GM12878 (cell line): ENCODE measurements at regions of chr2 and their contacts with region 1.

Region 1: DNA sequence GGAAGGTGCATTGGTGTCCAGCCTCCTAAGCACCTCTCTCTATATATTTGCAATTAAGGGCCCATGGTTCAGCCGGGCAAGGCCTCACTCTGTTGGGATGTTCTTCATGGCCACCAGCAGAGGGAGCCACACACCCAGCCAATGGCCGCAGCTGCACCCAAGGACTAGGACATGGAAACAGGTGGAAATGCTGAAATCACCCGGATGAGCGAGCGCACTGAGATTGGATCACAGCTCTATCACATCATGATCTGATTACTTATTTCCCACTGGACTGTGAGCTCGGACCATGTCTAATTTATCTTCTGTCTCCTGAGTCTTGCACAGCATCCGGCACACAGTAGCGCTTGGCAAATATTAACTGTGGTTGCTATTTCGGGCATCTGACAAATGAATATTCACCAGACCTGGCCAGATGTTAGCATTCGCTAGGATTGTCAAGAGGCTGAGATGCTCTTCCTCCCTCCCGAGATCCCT is 31.2 kb downstream of the KIF3C start:
- DNase-seq: peak; percentile 24
- ATAC-seq: peak; percentile 99
- H3K4me3 ChIP-seq: no peak overlapping the region
- H3K27ac ChIP-seq: no peak overlapping the region
- H3K4me1 ChIP-seq: no peaks in the 10 kb centered on the region
- H3K27me3 ChIP-seq: no peaks in the 10 kb centered on the region
- CTCF ChIP-seq: peak; percentile 95 to 96 (median 95)
- EP300 ChIP-seq: no peak
- POLR2A ChIP-seq: no peak
- RAD21 ChIP-seq: peak; percentile 93

Region 2: GRCh38 chr2:25903216-25903776 is 47.8 kb before region 1 on chr2:
- CTCF ChIA-PET with region 1: no interaction called
- POLR2A ChIA-PET with region 1: no interaction called
- RAD21 ChIA-PET with region 1: no interaction called
- SMC1A ChIA-PET with region 1: no interaction called
- in situ Hi-C with region 1: loop called (anchors 5 kb)
- intact Hi-C with region 1: no loop called
- DNase-seq: no peak
- ATAC-seq: no peak
- H3K4me3 ChIP-seq: no peak overlapping the region
- H3K27ac ChIP-seq: no peak overlapping the region
- H3K4me1 ChIP-seq: no peaks in the 10 kb centered on the region
- H3K27me3 ChIP-seq: no peaks in the 10 kb centered on the region; a peak in 2 of 4 replicates
- CTCF ChIP-seq: no peak
- EP300 ChIP-seq: no peak
- POLR2A ChIP-seq: no peak
- RAD21 ChIP-seq: no peak

Region 3: GRCh38 chr2:25972049-25972823 is 21.1 kb after region 1 on chr2:
- CTCF ChIA-PET with region 1: interaction called, 13 read pairs
- POLR2A ChIA-PET with region 1: no interaction called
- RAD21 ChIA-PET with region 1: no interaction called
- SMC1A ChIA-PET with region 1: interaction called, 5 read pairs
- in situ Hi-C with region 1: no loop called
- intact Hi-C with region 1: no loop called
- DNase-seq: no peak
- ATAC-seq: no peak
- H3K4me3 ChIP-seq: no peak overlapping the region
- H3K27ac ChIP-seq: no peak overlapping the region
- H3K4me1 ChIP-seq: no peaks in the 10 kb centered on the region
- H3K27me3 ChIP-seq: no peaks in the 10 kb centered on the region
- CTCF ChIP-seq: no peak
- EP300 ChIP-seq: no peak
- POLR2A ChIP-seq: no peak
- RAD21 ChIP-seq: no peak

Region 4: DNA sequence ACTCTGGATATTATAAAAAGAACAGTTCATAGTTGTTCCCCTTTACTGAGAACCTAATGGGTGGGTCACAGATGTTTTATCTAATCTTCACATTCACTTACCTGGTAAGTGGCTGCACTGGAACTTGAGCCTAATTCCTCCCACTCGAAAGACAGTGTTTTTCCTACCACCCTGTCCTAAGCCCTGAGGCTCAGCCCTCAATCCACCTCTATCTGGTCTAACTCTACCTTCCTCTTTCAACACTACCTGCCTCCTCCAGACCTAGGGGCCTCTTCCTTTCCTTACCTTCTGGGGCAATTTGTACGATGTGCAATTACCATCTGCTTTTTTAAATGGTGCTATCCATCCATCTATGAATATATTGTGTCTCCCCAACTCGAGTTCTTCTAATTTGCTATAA is 40.9 kb after region 1 on chr2:
- CTCF ChIA-PET with region 1: interaction called, 7 read pairs
- POLR2A ChIA-PET with region 1: no interaction called
- RAD21 ChIA-PET with region 1: interaction called, 6 read pairs
- SMC1A ChIA-PET with region 1: interaction called, 10 read pairs
- in situ Hi-C with region 1: no loop called
- intact Hi-C with region 1: no loop called
- DNase-seq: no peak
- ATAC-seq: peak; percentile 50
- H3K4me3 ChIP-seq: no peak overlapping the region
- H3K27ac ChIP-seq: no peak overlapping the region
- H3K4me1 ChIP-seq: no peaks in the 10 kb centered on the region
- H3K27me3 ChIP-seq: no peaks in the 10 kb centered on the region
- CTCF ChIP-seq: no peak
- EP300 ChIP-seq: no peak
- POLR2A ChIP-seq: no peak
- RAD21 ChIP-seq: no peak

Region 5: GRCh38 chr2:26095758-26096157 is 144.6 kb after region 1 on chr2:
- CTCF ChIA-PET with region 1: no interaction called
- POLR2A ChIA-PET with region 1: no interaction called
- RAD21 ChIA-PET with region 1: no interaction called
- SMC1A ChIA-PET with region 1: no interaction called
- in situ Hi-C with region 1: no loop called
- intact Hi-C with region 1: no loop called
- DNase-seq: no peak
- ATAC-seq: no peak
- H3K4me3 ChIP-seq: no peak overlapping the region
- H3K27ac ChIP-seq: no peak overlapping the region
- H3K4me1 ChIP-seq: no peaks in the 10 kb centered on the region
- H3K27me3 ChIP-seq: no peaks in the 10 kb centered on the region
- CTCF ChIP-seq: no peak
- EP300 ChIP-seq: no peak
- POLR2A ChIP-seq: no peak
- RAD21 ChIP-seq: no peak

Region 6: DNA sequence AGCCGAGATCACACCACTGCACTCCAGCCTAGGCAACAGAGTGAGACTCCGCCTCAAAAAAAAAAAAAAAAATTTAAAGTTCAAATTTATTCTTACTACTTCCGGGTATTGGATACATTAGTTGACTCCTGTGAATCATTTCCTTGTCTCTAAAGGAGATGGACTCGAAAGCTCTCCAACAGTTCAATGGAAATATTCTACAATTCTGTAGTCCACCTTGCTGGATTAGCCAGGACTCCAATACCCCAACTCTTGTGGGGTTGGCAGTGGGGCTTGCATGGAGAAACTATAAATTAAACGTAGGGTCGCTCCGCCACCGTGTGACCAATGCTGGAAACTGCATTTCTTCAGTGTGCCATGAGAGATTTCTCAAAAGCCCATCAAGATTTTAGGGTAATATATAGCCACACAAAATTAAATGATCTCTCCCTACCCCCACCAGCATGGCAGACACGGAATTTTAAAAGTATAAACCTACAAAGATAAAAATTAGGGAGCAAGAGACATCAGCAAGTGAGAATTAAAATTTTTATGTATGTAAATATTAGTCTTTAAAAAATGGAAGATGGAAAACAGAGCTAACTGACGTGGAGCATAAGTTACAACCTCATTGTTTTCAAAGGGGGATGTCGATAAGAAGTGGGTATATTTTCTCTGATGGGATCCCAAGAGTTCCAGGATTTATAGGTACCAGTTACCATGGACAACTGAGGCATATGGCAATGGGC is 194.0 kb after region 1 on chr2:
- CTCF ChIA-PET with region 1: interaction called, 37 read pairs
- POLR2A ChIA-PET with region 1: no interaction called
- RAD21 ChIA-PET with region 1: interaction called, 8 read pairs
- SMC1A ChIA-PET with region 1: interaction called, 15 read pairs
- in situ Hi-C with region 1: loop called (anchors 5 kb)
- intact Hi-C with region 1: loop called (anchors 1 kb)
- DNase-seq: peak; percentile 23
- ATAC-seq: peak; percentile 87
- H3K4me3 ChIP-seq: no peak overlapping the region
- H3K27ac ChIP-seq: no peak overlapping the region
- H3K4me1 ChIP-seq: no peaks in the 10 kb centered on the region
- H3K27me3 ChIP-seq: no peaks in the 10 kb centered on the region
- CTCF ChIP-seq: peak; percentile 66 to 86 (median 79)
- EP300 ChIP-seq: no peak
- POLR2A ChIP-seq: no peak
- RAD21 ChIP-seq: peak; percentile 95

Region 7: DNA sequence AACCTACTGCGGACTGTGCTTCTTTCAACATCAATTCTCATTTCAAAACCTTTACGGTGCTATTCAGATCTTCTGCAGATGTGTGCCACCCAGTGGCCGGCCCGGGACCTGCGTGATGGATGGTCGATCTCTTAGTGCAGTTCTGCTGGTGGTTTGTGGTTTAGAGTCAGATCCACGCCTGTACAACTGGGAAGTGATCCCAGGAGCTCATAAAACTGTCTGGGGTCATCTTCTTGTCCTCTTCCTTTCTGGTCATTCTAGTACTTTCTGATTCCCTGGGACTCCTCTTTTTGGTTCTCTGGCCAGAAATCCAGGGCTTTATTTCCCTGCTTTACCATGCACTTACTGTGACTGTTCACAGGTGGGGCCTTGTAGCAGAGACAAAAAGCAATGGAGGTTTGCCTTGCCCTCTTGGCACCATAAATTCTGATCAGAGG is 379.0 kb after region 1 on chr2:
- CTCF ChIA-PET with region 1: interaction called, 4 read pairs
- POLR2A ChIA-PET with region 1: no interaction called
- RAD21 ChIA-PET with region 1: no interaction called
- SMC1A ChIA-PET with region 1: no interaction called
- in situ Hi-C with region 1: no loop called
- intact Hi-C with region 1: loop called (anchors 5 kb)
- DNase-seq: peak; percentile 31
- ATAC-seq: peak; percentile 99
- H3K4me3 ChIP-seq: no peak overlapping the region
- H3K27ac ChIP-seq: no peak overlapping the region
- H3K4me1 ChIP-seq: no peaks in the 10 kb centered on the region
- H3K27me3 ChIP-seq: no peaks in the 10 kb centered on the region
- CTCF ChIP-seq: peak; percentile 91 to 96 (median 92)
- EP300 ChIP-seq: no peak
- POLR2A ChIP-seq: no peak
- RAD21 ChIP-seq: peak; percentile 92

Region 8: DNA sequence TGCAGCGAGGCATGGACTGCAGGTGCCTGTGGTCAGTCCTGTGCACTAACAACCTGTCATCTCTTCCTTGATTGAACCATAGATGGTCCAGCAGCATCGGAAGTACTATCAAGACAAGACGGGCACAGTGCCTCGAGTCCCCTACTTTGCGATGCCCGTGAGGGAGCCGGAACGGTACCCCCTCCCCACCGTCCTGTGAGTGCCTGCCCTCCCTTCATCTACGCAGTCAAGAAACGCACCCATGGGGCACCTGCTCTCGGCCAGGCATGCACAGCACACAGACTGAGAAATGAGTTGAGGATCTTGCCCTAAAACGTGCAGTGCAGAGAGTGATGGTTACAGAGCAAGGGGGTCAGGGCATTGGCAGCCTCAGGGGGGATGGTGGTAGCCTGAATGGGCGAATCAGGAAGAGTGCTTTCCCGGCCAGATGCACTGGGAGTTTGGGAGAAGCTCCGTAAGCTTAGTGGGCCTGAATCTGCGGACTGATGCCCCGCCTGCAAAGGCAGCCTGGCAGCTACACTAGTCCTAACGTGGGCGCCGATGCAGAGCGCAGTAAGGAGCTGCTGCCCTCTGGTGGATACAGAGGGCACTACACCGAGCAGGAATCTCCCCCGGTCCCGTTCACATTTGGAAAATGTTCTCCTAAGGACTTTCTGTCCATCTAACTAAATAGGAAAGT is 626.5 kb after region 1 on chr2:
- CTCF ChIA-PET with region 1: interaction called, 7 read pairs
- POLR2A ChIA-PET with region 1: no interaction called
- RAD21 ChIA-PET with region 1: no interaction called
- SMC1A ChIA-PET with region 1: interaction called, 4 read pairs
- in situ Hi-C with region 1: loop called (anchors 5 kb)
- intact Hi-C with region 1: loop called (anchors 5 kb)
- DNase-seq: no peak
- ATAC-seq: peak; percentile 93
- H3K4me3 ChIP-seq: no peak overlapping the region
- H3K27ac ChIP-seq: no peak overlapping the region
- H3K4me1 ChIP-seq: no peaks in the 10 kb centered on the region
- H3K27me3 ChIP-seq: peaks cover 0 to 4% of the 10 kb centered on the region in 2 experiments; a peak in 2 of 4 replicates
- CTCF ChIP-seq: peak; percentile 94 to 97 (median 97)
- EP300 ChIP-seq: no peak
- POLR2A ChIP-seq: no peak
- RAD21 ChIP-seq: peak; percentile 82